GM10248 (cell line): ENCODE measurements at regions of chr6 and their contacts with region 1.

Region 1: DNA sequence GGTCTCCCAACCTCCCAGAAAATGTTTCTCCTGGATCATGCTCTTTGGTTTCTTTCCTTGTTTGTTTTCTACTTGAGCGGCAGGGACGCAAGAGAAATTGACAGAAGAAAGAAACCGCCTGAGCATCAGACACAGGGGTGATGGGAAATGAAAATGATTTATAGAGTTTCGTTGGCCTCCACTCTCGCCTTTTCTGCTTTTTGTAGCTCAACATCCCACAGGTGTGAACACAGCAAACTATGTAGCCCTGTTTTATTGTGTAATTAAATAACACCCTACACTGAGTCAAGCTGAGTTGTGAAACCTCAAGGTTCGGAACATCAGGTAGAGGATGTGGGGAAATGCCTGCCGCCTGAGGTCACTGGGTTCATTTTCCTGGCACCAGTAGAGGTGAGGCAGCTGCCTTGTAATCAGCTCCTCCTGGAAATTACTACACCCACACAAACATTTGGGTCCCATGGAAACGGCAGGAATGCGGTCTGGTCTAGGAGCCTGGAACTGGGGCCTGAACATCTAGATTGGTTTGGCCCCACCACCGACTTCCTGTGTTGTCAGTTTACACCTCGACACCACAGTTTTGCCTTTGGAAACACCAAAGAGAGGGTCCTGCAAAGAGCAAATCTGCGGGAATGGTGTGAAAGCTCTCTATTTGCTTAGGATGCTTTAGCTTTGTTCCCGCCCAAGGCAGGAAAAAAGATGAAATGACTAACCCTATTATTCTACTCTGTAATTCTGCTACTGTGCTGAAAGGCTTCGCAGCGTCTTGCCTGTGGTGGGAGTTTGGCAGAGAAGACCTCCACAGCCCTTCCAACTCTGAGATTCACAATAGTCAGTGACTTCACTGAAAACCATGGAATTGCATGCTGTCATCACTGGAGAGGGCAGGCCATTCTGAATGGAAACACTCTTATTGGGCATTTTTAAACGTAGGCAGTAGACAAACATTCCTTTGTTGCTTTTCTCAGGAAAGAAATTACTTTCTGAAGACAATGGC is 53.0 kb downstream of the ADAT2 start:
- DNase-seq: no peak
- CTCF ChIP-seq: no peak

Region 2: GRCh38 chr6:143125864-143126573 is 271.5 kb before region 1 on chr6:
- CTCF ChIA-PET with region 1: no interaction called
- POLR2A ChIA-PET with region 1: no interaction called
- DNase-seq: no peak
- CTCF ChIP-seq: no peak

Region 3: GRCh38 chr6:143376861-143377260 is 20.7 kb before region 1 on chr6:
- CTCF ChIA-PET with region 1: interaction called, 12 read pairs
- POLR2A ChIA-PET with region 1: no interaction called
- DNase-seq: no peak
- CTCF ChIP-seq: no peak

Region 4: GRCh38 chr6:143385636-143386035 is 11.9 kb before region 1 on chr6:
- CTCF ChIA-PET with region 1: interaction called, 15 read pairs
- POLR2A ChIA-PET with region 1: no interaction called
- DNase-seq: no peak
- CTCF ChIP-seq: no peak